HCT116 (cell line): ENCODE measurements at regions of chr14 and their contacts with region 1.

Region 1: DNA sequence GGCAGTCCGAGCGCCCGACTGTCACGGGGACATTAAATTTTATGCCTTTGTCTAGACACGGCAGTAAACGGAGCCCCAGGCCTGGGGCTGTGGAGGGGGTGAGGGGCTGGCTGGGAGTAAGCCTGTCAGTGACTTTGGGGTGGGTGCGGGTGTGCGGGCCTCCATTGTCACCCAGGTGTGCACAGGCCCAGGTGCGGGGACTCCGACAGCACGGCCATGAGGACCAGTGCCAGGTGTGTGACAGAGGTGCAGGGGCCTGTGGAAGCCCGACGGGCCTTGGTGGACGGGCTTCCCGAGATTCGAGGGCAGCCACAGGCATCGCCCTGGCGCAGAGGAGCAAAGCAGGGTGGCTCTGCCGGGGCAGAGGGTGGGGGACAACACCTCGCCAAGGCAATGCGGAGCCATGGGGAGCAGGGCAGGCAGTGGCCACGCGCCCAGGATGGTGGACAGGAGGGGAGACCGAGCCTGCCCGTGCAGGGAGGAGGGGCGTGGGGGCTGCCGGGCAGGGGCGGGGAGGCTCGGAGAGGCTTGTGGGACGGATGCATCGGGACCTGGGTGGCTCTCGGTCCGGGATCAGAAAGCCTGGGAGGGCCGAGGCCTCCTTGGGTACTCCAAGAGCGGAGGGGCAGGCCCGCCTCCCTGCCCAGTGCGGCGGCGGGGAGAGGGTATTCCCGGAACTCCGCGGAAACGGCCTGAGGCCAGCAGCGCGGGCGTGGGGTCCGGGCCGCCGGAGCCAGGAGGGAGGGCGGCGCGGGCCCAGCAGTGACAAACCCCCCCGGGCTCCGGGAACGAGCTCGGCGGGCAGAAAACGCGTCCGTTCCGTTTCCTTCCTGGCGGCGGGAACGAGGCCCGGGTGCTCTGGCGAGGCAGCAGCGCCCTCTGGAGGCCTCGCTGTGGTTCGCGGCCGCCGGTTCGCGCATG is 1.5 kb downstream of the TMEM121 start:
- DNase-seq: no peak
- ATAC-seq: peak; percentile 74
- H3K4me3 ChIP-seq: peak overlapping the region; percentile 42 to 62
- H3K27ac ChIP-seq: peak overlapping the region; percentile 49
- H3K4me1 ChIP-seq: peaks cover 8 to 23% of the 10 kb centered on the region in 2 experiments; a peak in 3 of 4 replicates
- H3K27me3 ChIP-seq: no peaks in the 10 kb centered on the region
- CTCF ChIP-seq: peak; percentile 58 to 83 (median 81)
- POLR2A ChIP-seq: no peak
- RAD21 ChIP-seq: peak; percentile 97

Region 2: DNA sequence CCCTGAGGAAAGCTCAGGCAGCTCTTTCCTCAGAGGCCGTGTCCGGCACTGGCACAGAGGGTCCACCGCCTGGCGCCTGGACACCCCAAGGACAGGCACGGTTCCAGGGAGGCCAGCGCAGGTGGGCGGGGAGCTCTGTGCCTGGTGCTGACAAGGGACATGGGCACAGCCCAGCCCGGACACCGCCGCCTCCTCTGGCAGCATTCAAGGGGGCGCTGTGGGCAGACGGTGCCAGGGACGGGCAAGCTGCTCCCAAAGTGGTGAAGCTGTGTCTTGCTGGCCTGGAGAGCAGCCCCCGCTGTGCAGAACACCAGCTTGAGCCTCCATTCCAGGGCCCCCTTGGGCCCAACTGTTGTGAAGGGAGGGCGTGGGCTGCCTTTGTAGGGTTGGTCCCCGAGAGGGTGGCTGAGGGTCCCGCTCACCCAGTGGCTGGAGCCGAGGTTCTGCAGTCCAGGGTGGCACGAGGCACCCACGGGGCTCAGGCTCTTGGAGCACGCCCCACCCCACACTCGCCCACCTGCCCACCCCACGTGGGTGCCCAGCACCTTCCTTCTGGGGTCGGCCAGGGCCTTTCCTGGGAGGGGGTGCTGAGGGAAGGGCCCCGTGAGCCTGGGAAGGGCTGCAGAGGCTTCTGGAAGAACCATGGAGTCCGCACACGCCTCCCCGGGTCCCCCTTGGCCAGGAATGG is 158.8 kb before region 1 on chr14:
- CTCF ChIA-PET with region 1: interaction called, 19 read pairs
- POLR2A ChIA-PET with region 1: no interaction called
- RAD21 ChIA-PET with region 1: interaction called, 3 to 6 read pairs
- intact Hi-C with region 1: loop called (anchors 1 kb)
- DNase-seq: no peak
- ATAC-seq: no peak
- H3K4me3 ChIP-seq: no peak overlapping the region
- H3K27ac ChIP-seq: no peak overlapping the region
- H3K4me1 ChIP-seq: peaks cover 5 to 7% of the 10 kb centered on the region in 2 experiments
- H3K27me3 ChIP-seq: no peaks in the 10 kb centered on the region
- CTCF ChIP-seq: no peak
- POLR2A ChIP-seq: no peak
- RAD21 ChIP-seq: no peak

Region 3: DNA sequence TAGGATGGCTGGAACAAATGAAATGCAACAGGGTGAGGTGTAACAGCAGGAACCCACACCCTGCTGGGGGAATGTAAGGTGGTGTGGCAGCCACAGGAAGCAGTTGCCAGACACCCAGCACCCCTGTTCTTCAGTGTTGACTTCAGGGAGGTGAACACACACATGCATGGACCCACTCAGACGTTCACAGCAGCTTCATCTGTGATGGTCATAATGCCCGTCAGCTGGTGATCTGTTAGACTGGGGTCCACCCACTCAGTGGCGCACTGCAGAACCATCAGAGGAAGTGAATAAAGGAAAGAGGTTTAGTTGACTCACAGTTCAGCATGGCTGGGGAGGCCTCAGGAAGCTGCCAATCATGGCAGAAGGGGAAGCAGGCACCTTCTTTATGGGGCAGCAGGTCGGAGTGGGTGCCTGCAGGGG is 152.3 kb before region 1 on chr14:
- CTCF ChIA-PET with region 1: interaction called, 19 read pairs
- POLR2A ChIA-PET with region 1: no interaction called
- RAD21 ChIA-PET with region 1: interaction called, 3 to 6 read pairs
- intact Hi-C with region 1: loop called (anchors 1 kb)
- DNase-seq: no peak
- ATAC-seq: no peak
- H3K4me3 ChIP-seq: no peak overlapping the region
- H3K27ac ChIP-seq: no peak overlapping the region
- H3K4me1 ChIP-seq: peaks cover 4 to 8% of the 10 kb centered on the region in 2 experiments; a peak in 3 of 4 replicates
- H3K27me3 ChIP-seq: no peaks in the 10 kb centered on the region
- CTCF ChIP-seq: no peak
- POLR2A ChIP-seq: no peak
- RAD21 ChIP-seq: no peak

Region 4: DNA sequence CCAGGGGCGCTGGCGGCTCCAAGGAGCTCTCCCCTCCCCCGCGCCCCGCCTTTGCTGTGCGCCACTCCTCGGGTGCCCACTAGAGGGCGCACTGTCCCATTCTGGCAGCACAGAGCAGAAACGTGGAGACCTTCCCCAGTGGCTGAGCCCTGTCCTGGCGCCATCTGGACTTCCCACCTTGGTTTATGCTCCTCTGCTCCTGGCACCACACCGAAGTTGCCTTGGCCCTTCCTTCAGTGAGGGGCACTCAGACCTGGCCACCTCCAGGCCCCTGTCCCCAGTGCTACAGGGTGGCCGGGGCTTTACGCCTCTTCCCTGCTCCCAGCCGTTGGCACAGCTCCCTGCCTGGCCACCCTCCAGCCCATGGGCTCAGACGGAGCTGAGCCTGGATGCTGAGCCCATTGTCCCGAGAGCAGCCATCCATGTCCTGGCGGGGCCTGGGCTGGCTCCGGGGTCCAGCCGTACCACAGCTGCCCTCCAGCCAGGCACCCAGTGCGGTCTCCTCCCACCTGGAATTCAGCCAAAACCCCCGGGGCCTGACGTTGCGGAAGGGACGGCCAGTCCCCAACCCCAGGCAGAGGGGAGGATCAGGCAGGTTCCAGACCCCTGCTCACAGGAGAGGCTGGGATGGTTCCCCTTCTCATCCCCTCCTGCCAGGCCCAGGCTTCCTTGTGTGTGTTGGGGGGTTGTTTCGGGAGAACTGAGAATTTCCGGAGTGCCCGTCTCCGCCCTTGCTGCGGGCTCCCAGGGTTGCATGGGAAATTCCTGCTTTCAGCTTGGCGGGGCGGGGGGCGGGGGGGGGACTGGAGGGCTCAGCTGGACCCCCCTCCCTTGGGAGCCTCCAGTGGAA is 46.7 kb before region 1 on chr14:
- CTCF ChIA-PET with region 1: interaction called, 17 read pairs
- POLR2A ChIA-PET with region 1: no interaction called
- RAD21 ChIA-PET with region 1: interaction called in 1 of 2 experiments, 5 read pairs
- intact Hi-C with region 1: no loop called
- DNase-seq: peak; percentile 55
- ATAC-seq: peak; percentile 80
- H3K4me3 ChIP-seq: peak overlapping the region; percentile 54 to 77
- H3K27ac ChIP-seq: peak overlapping the region; percentile 95
- H3K4me1 ChIP-seq: peaks cover 28 to 59% of the 10 kb centered on the region in 2 experiments
- H3K27me3 ChIP-seq: no peaks in the 10 kb centered on the region
- CTCF ChIP-seq: peak in 2 of 3 experiments; percentile 98 to 99; a peak in 4 of 6 replicates
- POLR2A ChIP-seq: peak; percentile 25
- RAD21 ChIP-seq: no peak

Region 5: DNA sequence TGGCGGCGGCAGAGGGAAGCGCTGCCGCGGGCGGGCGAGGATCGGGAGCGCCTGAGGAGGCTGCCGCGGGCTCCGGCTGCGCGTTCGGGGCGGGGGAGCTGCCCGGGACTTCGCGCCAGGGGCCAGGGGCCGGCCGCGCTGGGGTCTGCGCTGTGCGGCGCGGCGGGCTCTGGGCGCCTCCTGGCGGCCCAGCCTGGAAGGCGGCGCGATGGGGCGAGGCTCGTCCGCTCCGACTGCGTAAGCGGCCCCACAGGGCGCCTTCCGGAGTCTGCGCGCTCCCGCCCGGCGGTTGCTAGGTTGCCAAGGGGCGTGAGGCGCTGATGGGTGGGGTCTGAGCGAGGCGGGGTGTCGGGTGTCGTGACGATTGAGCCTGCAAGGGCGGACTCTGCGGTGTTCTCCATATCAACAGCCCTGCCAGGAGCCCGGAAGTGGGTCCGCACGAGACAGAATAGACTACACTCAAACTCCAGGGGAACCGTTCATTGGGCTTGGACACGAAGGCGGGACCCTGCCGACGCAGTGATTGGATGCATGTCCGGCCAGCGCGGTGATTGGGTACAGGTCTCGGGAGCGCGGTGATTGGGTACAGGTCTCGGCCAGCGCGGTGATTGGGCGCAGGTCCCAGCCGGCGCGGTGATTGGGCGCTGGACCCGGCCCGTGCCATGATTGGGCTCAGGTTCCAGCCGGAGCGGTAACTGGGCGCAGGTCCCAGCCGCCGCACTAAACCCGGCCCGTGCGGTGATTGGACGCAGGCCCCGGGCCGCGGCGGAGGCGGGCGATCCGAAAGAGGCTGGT is 37.2 kb before region 1 on chr14 and contains the start of gene TEDC1:
- CTCF ChIA-PET with region 1: interaction called, 11 read pairs
- POLR2A ChIA-PET with region 1: no interaction called
- RAD21 ChIA-PET with region 1: interaction called in 1 of 2 experiments, 5 read pairs
- intact Hi-C with region 1: loop called (anchors 5 kb)
- DNase-seq: peak; percentile 100
- ATAC-seq: peak; percentile 78
- H3K4me3 ChIP-seq: peak within 1 kb of the TSS; percentile 74 to 87
- H3K27ac ChIP-seq: peak within 1 kb of the TSS; percentile 100
- H3K4me1 ChIP-seq: peaks cover 20 to 49% of the 10 kb centered on the region in 2 experiments
- H3K27me3 ChIP-seq: no peaks in the 10 kb centered on the region
- CTCF ChIP-seq: peak in 2 of 3 experiments; percentile 50 to 71; a peak in 4 of 6 replicates
- POLR2A ChIP-seq: peak; percentile 70
- RAD21 ChIP-seq: no peak
- total RNA-seq, gene TEDC1: 40.4 TPM

Region 6: DNA sequence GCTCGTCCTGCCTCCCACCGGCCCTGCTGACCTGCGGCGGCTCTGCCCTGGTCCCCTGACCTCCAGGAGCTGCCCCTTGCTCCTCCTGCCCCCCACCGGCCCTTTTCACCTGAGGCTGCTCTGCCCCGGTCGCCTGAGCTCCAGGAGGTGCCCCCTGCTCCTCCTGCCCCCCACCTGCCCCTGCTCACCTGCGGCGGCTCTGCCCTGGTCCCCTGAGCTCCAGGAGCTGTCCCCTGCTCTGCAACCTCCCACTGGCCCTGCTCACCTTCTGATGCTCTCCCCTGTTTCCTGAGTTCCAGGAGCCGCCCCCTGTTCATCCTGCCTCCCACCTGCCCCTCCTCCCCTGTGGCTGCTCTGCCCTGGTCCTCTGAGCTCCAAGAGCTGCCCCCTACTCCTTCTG is 99.8 kb after region 1 on chr14:
- CTCF ChIA-PET with region 1: no interaction called
- POLR2A ChIA-PET with region 1: no interaction called
- RAD21 ChIA-PET with region 1: no interaction called
- intact Hi-C with region 1: no loop called
- DNase-seq: no peak
- ATAC-seq: no peak
- H3K4me3 ChIP-seq: no peak overlapping the region
- H3K27ac ChIP-seq: no peak overlapping the region
- H3K4me1 ChIP-seq: no peaks in the 10 kb centered on the region
- H3K27me3 ChIP-seq: no peaks in the 10 kb centered on the region
- CTCF ChIP-seq: no peak
- POLR2A ChIP-seq: no peak
- RAD21 ChIP-seq: no peak